GM10248 (cell line): ENCODE measurements at regions of chr11 and their contacts with region 1.

Region 1: GRCh38 chr11:15101072-15101709 is 13.5 kb upstream of the INSC start:
- DNase-seq: peak; percentile 49
- CTCF ChIP-seq: peak; percentile 90

Region 2: GRCh38 chr11:14835491-14836105 is 265.6 kb before region 1 on chr11:
- CTCF ChIA-PET with region 1: no interaction called
- POLR2A ChIA-PET with region 1: no interaction called
- DNase-seq: no peak
- CTCF ChIP-seq: no peak

Region 3: DNA sequence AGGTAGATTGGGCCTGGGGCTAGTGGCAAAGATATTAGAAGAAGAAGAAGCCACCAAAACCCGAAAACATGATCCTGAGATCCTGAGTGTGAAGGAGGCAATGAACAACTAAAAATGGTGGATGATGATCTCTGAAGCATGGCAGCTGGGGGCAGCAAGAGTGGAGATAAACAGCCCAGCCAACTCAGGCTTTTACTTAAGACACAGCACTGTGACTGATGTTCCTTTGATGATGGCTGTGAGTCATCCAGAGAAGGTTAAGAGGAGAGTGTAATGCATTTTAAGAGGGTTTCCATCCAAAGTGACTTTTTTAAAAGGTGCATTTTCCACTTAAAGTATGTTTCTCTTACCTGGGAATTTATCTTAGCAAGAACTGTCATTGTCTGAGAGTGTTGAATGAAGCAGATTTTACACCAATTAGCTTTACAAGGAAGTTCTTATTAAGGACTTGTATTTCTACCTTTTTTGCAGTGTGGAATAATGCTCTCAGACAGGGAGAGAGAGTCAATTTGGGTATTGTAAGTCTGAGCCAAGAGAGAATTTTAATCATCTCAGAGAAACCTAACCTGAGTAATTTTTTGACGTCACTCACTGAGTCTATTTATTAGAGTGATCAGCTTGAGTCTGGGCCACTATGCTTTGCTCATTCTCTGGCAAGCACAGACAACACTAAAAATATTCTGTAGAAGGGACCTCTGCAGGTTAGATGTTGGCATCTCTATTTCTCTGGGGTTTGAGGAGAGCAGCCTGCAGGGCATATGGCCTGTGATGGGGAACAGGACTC is 41.9 kb before region 1 on chr11:
- CTCF ChIA-PET with region 1: no interaction called
- POLR2A ChIA-PET with region 1: no interaction called
- DNase-seq: no peak
- CTCF ChIP-seq: no peak

Region 4: DNA sequence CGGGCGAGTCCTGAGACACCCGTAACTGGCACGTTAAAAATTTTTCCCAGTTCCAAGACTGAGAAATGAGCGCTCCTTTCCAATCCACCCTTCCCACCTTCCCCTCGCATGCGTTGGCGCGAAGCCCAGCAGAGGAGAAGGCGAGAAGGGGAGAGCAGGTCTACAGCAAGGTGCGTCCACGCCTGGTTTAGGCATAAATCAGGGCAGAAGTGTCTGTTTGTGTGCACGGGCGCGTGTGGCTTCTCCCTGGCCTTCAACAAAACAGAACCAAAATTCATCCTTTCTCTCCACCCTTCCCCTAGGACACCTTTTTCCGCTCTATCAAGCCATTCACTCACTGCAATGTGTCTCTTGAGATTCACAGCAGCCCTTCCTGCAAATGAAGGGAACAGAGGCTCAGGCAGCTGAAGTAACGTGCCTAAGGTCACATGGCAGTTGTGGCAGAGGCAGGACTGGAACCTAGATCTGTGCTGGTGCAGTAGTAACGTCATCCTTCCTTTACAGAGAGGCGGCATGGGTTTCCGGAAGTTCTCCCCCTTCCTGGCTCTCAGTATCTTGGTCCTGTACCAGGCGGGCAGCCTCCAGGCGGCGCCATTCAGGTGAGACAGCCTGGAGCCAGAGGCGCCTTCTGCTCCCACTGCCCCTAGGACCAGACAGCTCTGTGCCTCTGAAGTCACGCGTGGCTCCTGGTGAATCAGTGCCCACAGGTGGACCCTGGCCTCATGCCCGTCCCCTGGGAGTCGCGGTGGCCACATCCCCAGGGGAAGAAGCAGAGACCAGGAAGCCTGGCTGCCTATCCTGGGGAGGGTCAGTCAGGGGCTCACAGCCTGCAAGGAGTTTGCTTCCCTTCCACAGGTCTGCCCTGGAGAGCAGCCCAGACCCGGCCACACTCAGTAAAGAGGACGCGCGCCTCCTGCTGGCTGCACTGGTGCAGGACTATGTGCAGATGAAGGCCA is 26.7 kb before region 1 on chr11:
- CTCF ChIA-PET with region 1: interaction called, 21 read pairs
- POLR2A ChIA-PET with region 1: no interaction called
- DNase-seq: peak; percentile 63
- CTCF ChIP-seq: peak; percentile 94

Region 5: GRCh38 chr11:15123849-15124248 is 22.7 kb after region 1 on chr11:
- CTCF ChIA-PET with region 1: interaction called, 10 read pairs
- POLR2A ChIA-PET with region 1: no interaction called
- DNase-seq: no peak
- CTCF ChIP-seq: no peak

Region 6: GRCh38 chr11:15159085-15159484 is 57.9 kb after region 1 on chr11:
- CTCF ChIA-PET with region 1: interaction called, 11 read pairs
- POLR2A ChIA-PET with region 1: no interaction called
- DNase-seq: peak; percentile 24
- CTCF ChIP-seq: peak; percentile 14

Region 7: DNA sequence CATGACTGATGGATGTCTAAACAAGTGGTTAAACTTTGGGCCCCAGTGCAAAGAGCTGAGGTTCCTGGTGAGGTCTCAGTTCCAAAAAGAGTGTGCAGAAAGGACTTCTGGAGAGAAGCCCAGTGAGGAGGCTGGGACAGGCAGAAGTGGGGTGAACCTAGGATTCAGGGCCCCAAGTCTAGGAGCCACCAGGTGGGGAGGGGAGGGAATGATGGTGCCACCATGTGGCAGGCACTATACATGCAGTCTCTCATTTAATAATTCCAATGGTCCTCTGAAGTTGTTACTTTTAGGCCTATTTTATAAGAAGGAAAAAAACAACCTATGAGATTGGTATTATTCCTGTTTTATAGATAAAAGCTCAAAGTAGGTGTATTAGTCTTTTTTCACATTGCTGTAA is 115.5 kb after region 1 on chr11:
- CTCF ChIA-PET with region 1: interaction called, 40 read pairs
- POLR2A ChIA-PET with region 1: no interaction called
- DNase-seq: peak; percentile 29
- CTCF ChIP-seq: peak; percentile 21